OCI-LY7 (cell line): ENCODE measurements at regions of chr3 and their contacts with region 1.

Region 1: DNA sequence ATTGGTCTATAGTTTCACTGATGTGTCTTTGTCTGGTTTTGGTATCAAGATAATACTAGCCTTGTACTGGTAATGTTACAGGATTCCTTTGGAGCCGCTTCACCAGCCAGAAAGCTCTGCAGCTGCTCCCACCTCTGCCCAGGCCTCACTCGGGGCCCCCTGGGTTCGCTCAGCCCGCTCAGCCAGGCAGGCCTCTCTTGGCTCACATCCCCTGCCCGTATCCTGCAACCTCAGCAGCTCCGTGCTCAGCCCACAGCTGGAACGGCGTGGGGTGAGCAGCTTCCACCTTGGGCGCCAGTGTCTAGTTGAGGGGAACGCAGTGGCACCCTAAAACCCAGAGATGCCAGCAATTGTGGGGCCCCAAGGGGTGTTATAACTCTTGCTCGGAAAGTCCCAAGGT is 429.7 kb upstream of the ROBO2 start:
- DNase-seq: no peak
- H3K4me3 ChIP-seq: no peak overlapping the region
- H3K27ac ChIP-seq: no peak overlapping the region
- H3K4me1 ChIP-seq: no peaks in the 10 kb centered on the region
- CTCF ChIP-seq: no peak

Region 2: DNA sequence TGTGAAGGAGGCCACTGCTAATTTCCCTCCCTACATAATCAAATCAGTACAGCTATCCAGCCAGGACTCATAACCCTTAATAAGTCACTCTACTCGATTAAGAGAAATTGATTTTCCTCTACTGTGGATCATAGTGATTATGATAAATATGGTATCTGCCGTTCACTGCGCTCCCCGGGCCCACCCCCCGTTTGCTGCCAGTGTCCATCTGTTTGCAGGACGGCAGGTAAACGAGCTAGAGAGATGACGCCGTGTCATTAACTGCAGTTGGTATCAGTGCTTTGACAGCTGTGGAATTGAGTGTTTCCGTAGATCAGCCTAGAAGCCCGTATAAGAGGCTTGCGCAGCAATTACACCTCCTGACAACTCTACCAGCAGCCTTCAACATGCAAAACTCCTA is 524.6 kb after region 1 on chr3:
- CTCF ChIA-PET with region 1: no interaction called
- POLR2A ChIA-PET with region 1: interaction called, 11 read pairs
- intact Hi-C with region 1: no loop called
- DNase-seq: no peak
- H3K4me3 ChIP-seq: no peak overlapping the region
- H3K27ac ChIP-seq: no peak overlapping the region
- H3K4me1 ChIP-seq: no peaks in the 10 kb centered on the region
- CTCF ChIP-seq: no peak